ENCODE measurements at regions of chr1 and their contacts with region 1.

Region 1: DNA sequence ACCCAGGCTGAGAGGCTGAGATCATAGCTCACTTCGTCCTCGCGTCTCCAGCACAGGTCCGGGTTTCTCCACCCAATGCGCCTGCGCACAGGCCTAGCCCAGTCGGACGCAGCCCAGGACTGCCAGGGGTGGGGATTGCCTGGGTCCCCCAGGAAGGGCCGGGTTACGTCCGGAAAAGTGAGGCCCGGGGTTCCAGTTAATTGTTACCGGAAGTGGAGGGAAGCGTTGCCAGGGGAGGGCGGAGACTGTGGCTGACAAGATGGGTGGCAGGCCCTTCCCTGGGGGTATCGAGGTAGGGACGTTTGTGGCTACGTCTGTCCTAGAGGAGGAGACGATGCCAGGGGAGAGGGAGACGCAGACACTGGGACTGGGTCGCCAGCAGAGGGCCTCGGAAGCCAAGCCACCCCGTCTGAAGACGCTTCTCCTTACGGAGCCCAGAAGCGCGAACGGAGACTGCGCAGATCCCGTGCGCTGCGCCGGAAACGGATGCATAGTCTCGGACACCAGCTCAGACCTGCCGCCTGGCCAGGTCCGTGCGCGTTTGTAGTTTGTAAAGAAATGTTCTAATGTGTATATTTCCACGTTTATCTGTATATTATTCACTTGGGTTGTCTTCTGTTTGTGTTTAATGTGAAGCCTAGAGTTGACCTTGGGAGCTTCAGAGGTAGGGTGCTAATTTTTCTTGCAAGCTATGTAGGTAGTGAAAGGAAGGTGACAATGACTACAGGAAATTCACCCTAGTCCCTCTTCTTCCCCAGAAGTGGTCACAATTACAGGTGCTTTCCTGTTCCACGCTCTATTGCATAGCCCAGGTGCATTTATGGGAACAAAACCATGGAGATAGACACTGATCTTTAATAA is 7.3 kb downstream of the RSRP1 start:
- DNase-seq: peak; percentile 88
- H3K4me3 Mint-ChIP-seq: peak overlapping the region; percentile 83
- H3K27ac Mint-ChIP-seq: peak overlapping the region; percentile 95
- H3K4me1 Mint-ChIP-seq: peaks cover 38% of the 10 kb centered on the region
- H3K27me3 Mint-ChIP-seq: no peaks in the 10 kb centered on the region

Region 2: DNA sequence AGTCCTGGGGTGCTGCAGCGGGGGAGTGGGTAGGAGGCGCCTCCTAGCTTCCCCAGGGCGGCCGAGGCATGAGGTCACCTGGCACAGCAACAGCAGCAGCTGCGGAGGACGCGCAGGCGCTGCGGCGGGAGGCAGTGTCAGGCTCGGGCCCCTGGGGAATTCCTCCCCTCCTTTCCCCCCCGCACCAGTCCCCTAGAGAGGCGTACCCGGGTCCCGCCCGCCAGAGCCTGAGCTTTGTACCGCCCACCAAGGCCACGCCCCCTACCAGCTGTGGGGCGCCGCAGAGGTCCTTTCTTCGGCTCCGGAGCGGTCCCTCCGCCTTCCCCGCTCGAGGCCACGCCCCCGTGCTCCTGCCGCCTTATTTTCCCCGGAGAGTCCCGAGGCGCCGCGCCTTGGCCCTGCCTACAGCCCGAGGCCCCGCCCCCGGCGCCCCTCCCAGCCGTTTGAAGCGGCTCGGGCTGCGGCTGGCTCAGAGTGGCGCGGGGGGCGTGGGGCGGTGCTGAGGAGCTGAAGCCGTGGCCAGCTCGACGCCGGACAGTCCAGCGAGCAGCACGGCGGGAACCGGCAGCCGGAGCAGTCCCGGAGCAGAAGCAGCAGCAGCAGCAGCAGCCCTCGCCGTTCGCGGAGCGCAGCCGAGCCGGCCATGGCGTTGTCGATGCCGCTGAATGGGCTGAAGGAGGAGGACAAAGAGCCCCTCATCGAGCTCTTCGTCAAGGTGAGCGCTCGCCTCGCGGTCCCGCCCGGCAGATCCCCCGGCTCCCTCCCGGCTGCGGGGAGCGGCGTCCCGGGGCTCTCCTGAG is 494.8 kb before region 1 on chr1 and contains the start of gene CLIC4:
- intact Hi-C with region 1: loop called (anchors 10 kb)
- DNase-seq: peak; percentile 100
- H3K4me3 Mint-ChIP-seq: peak within 1 kb of the TSS; percentile 91
- H3K27ac Mint-ChIP-seq: peak within 1 kb of the TSS; percentile 84
- H3K4me1 Mint-ChIP-seq: peaks cover 51% of the 10 kb centered on the region
- H3K27me3 Mint-ChIP-seq: no peaks in the 10 kb centered on the region
- total RNA-seq, gene CLIC4: 17.9 and 18.2 TPM in 2 replicates

Region 3: GRCh38 chr1:25039229-25039628 is 200.7 kb before region 1 on chr1:
- intact Hi-C with region 1: no loop called
- DNase-seq: no peak
- H3K4me3 Mint-ChIP-seq: no peak overlapping the region
- H3K27ac Mint-ChIP-seq: no peak overlapping the region
- H3K4me1 Mint-ChIP-seq: peaks cover 24% of the 10 kb centered on the region
- H3K27me3 Mint-ChIP-seq: peaks cover 13% of the 10 kb centered on the region

Region 4: GRCh38 chr1:25338188-25338981 is 98.5 kb after region 1 on chr1 and contains the start of gene TMEM50A:
- intact Hi-C with region 1: loop called (anchors 2 kb)
- DNase-seq: peak; percentile 94
- H3K4me3 Mint-ChIP-seq: peak within 1 kb of the TSS; percentile 97
- H3K27ac Mint-ChIP-seq: peak within 1 kb of the TSS; percentile 97
- H3K4me1 Mint-ChIP-seq: peaks cover 32% of the 10 kb centered on the region
- H3K27me3 Mint-ChIP-seq: no peaks in the 10 kb centered on the region
- total RNA-seq, gene TMEM50A: 113 and 116 TPM in 2 replicates